Endothelial cell of umbilical vein (primary cell): ENCODE measurements at regions of chr17 and their contacts with region 1.

Region 1: GRCh38 chr17:29617125-29617480 is 5.6 kb downstream of the CORO6 start:
- DNase-seq: peak; percentile 86
- H3K4me3 ChIP-seq: peak overlapping the region in 1 of 3 experiments; percentile 2
- H3K27ac ChIP-seq: no peak overlapping the region
- H3K4me1 ChIP-seq: peaks cover 33% of the 10 kb centered on the region
- H3K27me3 ChIP-seq: no peaks in the 10 kb centered on the region
- CTCF ChIP-seq: peak; percentile 91 to 94
- POLR2A ChIP-seq: no peak

Region 2: GRCh38 chr17:29495011-29495410 is 122.1 kb before region 1 on chr17:
- CTCF ChIA-PET with region 1: no interaction called
- POLR2A ChIA-PET with region 1: no interaction called
- dilution Hi-C with region 1: no loop called
- intact Hi-C with region 1: no loop called
- DNase-seq: no peak
- H3K4me3 ChIP-seq: no peak overlapping the region
- H3K27ac ChIP-seq: no peak overlapping the region
- H3K4me1 ChIP-seq: no peaks in the 10 kb centered on the region
- H3K27me3 ChIP-seq: no peaks in the 10 kb centered on the region
- CTCF ChIP-seq: no peak
- POLR2A ChIP-seq: no peak

Region 3: DNA sequence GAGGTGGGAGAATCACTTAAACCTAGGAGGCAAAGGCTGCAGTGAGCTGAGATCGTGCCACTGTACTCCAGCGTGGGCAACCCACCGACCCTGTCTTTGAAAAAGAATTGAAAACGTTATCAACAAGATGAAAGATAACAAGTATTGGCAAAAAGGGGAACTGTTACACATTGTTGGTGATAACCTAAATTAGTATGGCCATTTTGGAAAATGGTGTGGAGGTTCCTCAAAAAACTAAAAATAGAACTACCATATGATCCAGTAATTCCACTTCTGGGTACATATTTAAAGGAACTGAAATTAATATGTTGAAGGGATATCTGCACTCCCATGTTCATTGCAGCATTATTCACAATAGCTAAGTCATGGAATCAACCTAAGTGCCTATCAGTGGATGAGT is 111.3 kb before region 1 on chr17:
- CTCF ChIA-PET with region 1: no interaction called
- POLR2A ChIA-PET with region 1: no interaction called
- dilution Hi-C with region 1: no loop called
- intact Hi-C with region 1: no loop called
- DNase-seq: no peak
- H3K4me3 ChIP-seq: no peak overlapping the region
- H3K27ac ChIP-seq: no peak overlapping the region
- H3K4me1 ChIP-seq: peaks cover 7% of the 10 kb centered on the region
- H3K27me3 ChIP-seq: no peaks in the 10 kb centered on the region
- CTCF ChIP-seq: no peak
- POLR2A ChIP-seq: no peak

Region 4: DNA sequence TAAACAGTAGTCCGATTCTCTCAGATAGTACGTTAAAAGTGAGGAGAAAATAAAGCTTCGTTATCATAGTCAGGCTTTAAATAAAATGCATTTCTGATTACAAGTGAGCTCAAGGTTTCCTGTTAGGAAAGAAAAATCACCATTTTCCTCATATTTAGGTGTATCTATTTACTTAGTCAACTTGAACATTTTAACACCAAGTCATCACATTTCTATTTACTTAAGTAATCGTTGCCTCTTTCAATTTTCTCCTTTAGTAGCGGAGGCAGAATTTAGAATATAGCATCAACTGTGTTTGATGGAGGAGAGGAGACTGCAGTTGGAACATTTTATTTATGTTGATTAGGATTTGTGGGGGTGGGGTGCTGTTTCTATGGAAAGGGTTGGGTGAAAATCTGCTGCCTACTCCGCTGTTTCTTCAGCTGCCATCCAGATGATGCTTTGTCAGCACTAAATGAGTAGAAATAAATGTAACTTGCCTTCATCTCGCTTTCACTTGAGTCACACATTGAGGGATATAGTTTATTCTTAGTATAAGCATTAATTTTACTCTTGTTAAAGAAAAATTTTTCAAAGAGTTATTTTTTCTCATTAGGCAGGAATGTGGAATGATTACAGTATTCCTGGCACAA is 92.5 kb before region 1 on chr17:
- CTCF ChIA-PET with region 1: no interaction called
- POLR2A ChIA-PET with region 1: no interaction called
- dilution Hi-C with region 1: no loop called
- intact Hi-C with region 1: no loop called
- DNase-seq: no peak
- H3K4me3 ChIP-seq: no peak overlapping the region
- H3K27ac ChIP-seq: no peak overlapping the region
- H3K4me1 ChIP-seq: no peaks in the 10 kb centered on the region
- H3K27me3 ChIP-seq: no peaks in the 10 kb centered on the region
- CTCF ChIP-seq: no peak
- POLR2A ChIP-seq: no peak

Region 5: GRCh38 chr17:29568331-29569244 is 48.5 kb before region 1 on chr17 and contains the start of gene TP53I13:
- CTCF ChIA-PET with region 1: interaction called, 39 read pairs
- POLR2A ChIA-PET with region 1: no interaction called
- dilution Hi-C with region 1: no loop called
- intact Hi-C with region 1: loop called (anchors 5 kb)
- DNase-seq: peak; percentile 82
- H3K4me3 ChIP-seq: peak within 1 kb of the TSS; percentile 46 to 77 (median 70)
- H3K27ac ChIP-seq: peak within 1 kb of the TSS; percentile 24
- H3K4me1 ChIP-seq: peaks cover 26% of the 10 kb centered on the region
- H3K27me3 ChIP-seq: no peaks in the 10 kb centered on the region
- CTCF ChIP-seq: no peak
- POLR2A ChIP-seq: peak; percentile 57
- total RNA-seq, gene TP53I13: 33.8 and 41.1 TPM in 2 replicates

Region 6: GRCh38 chr17:29603109-29603674 is 13.9 kb before region 1 on chr17:
- CTCF ChIA-PET with region 1: interaction called, 120 read pairs
- POLR2A ChIA-PET with region 1: no interaction called
- dilution Hi-C with region 1: no loop called
- intact Hi-C with region 1: no loop called
- DNase-seq: no peak
- H3K4me3 ChIP-seq: no peak overlapping the region
- H3K27ac ChIP-seq: no peak overlapping the region
- H3K4me1 ChIP-seq: no peaks in the 10 kb centered on the region
- H3K27me3 ChIP-seq: no peaks in the 10 kb centered on the region
- CTCF ChIP-seq: no peak
- POLR2A ChIP-seq: no peak

Region 7: DNA sequence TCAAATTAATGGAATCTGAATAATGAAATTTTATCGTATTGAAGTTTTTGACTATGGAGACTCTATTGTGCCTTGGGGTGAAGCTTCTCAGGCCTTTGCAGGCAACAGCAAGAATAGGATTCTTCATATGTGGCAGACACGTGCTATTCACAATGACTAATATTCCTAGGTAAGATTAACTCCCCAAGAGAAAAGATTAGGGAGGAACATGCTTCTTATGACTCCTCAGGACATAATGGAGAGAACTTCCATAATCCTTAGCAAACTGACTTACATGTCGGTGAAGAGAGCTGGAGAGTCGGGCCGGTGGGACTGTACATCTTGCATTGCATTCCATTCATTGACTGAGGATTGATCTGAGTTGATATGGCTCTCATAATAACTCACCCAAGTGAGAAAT is 54.6 kb after region 1 on chr17:
- CTCF ChIA-PET with region 1: no interaction called
- POLR2A ChIA-PET with region 1: no interaction called
- dilution Hi-C with region 1: no loop called
- intact Hi-C with region 1: no loop called
- DNase-seq: no peak
- H3K4me3 ChIP-seq: no peak overlapping the region
- H3K27ac ChIP-seq: no peak overlapping the region
- H3K4me1 ChIP-seq: no peaks in the 10 kb centered on the region
- H3K27me3 ChIP-seq: no peaks in the 10 kb centered on the region
- CTCF ChIP-seq: no peak
- POLR2A ChIP-seq: no peak

Region 8: GRCh38 chr17:29682054-29682453 is 65.0 kb after region 1 on chr17:
- CTCF ChIA-PET with region 1: interaction called, 13 read pairs
- POLR2A ChIA-PET with region 1: no interaction called
- dilution Hi-C with region 1: no loop called
- intact Hi-C with region 1: no loop called
- DNase-seq: peak; percentile 41
- H3K4me3 ChIP-seq: no peak overlapping the region
- H3K27ac ChIP-seq: peak overlapping the region; percentile 91
- H3K4me1 ChIP-seq: peaks cover 33% of the 10 kb centered on the region
- H3K27me3 ChIP-seq: no peaks in the 10 kb centered on the region
- CTCF ChIP-seq: no peak
- POLR2A ChIP-seq: no peak

Region 9: GRCh38 chr17:29789196-29790170 is 172.4 kb after region 1 on chr17:
- CTCF ChIA-PET with region 1: interaction called, 20 read pairs
- POLR2A ChIA-PET with region 1: no interaction called
- dilution Hi-C with region 1: no loop called
- intact Hi-C with region 1: no loop called
- DNase-seq: no peak
- H3K4me3 ChIP-seq: no peak overlapping the region
- H3K27ac ChIP-seq: no peak overlapping the region
- H3K4me1 ChIP-seq: peaks cover 4% of the 10 kb centered on the region
- H3K27me3 ChIP-seq: no peaks in the 10 kb centered on the region
- CTCF ChIP-seq: no peak
- POLR2A ChIP-seq: no peak

Region 10: DNA sequence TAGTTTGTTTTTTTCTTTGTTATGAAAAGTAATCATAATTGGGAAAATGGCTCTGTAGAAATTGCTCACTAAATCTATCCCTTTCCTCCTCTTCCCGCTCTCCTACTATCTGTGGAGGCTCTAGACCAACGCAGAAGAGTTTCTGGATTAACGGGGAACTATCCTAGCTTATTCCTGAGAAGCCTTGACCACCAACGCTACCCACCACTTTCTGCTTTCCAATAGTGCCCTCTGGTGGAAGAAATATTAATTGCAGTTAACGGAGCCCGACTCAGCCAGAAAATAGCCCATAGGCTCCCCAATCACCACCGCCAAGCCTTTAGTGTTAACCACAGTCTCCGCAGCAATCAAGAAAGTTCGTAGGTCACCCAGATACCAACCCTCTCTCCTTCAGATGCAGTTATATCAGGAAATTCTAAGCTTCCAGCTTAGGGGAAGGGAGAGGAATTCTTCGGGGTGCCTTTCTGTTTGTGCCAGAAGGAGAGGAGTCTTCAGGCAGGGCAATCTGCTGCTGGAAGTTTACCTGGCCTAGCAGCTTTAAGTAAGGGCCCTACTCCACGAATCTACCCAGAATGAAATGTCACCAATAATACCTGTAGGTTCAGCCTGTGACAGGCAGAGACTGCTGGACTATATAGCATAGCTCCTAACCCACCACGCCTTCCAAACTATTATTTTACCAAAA is 476.5 kb after region 1 on chr17:
- CTCF ChIA-PET with region 1: interaction called, 86 read pairs
- POLR2A ChIA-PET with region 1: no interaction called
- dilution Hi-C with region 1: no loop called
- intact Hi-C with region 1: loop called (anchors 1 kb)
- DNase-seq: peak; percentile 72
- H3K4me3 ChIP-seq: no peak overlapping the region
- H3K27ac ChIP-seq: no peak overlapping the region
- H3K4me1 ChIP-seq: no peaks in the 10 kb centered on the region
- H3K27me3 ChIP-seq: no peaks in the 10 kb centered on the region
- CTCF ChIP-seq: peak; percentile 52 to 80
- POLR2A ChIP-seq: no peak